Naive thymus-derived CD4-positive, alpha-beta T cell (primary cell): ENCODE measurements at regions of chr1 and their contacts with region 1.

Region 1: GRCh38 chr1:156106624-156107488 is 7.7 kb upstream of the LMNA start:
- DNase-seq: peak in 1 of 9 donors; percentile 52
- ATAC-seq: no peak
- H3K4me3 ChIP-seq: peak overlapping the region; percentile 39
- H3K4me3 Mint-ChIP-seq: peak overlapping the region; percentile 39 to 85 (median 74)
- H3K27ac ChIP-seq: peak overlapping the region; percentile 73
- H3K27ac Mint-ChIP-seq: peak overlapping the region; percentile 88 to 99 (median 96)
- H3K4me1 ChIP-seq: peaks cover 12 to 38% of the 10 kb centered on the region in 2 donors
- H3K4me1 Mint-ChIP-seq: peaks cover 12 to 45% (median 25%) of the 10 kb centered on the region in 7 donors
- H3K27me3 ChIP-seq: peaks cover 0 to 2% of the 10 kb centered on the region in 2 donors
- H3K27me3 Mint-ChIP-seq: peaks cover 0 to 54% (median 0%) of the 10 kb centered on the region in 5 donors

Region 2: GRCh38 chr1:156090822-156091188 is 16.1 kb before region 1 on chr1:
- CTCF ChIA-PET with region 1: interaction called, 5 read pairs
- POLR2A ChIA-PET with region 1: interaction called, 5 read pairs
- intact Hi-C with region 1: loop called in 1 of 2 experiments (anchors 2 kb)
- DNase-seq: peak; percentile 69 to 86 (median 82)
- ATAC-seq: peak; percentile 97
- H3K4me3 ChIP-seq: no peak overlapping the region
- H3K4me3 Mint-ChIP-seq: no peak overlapping the region
- H3K27ac ChIP-seq: no peak overlapping the region
- H3K27ac Mint-ChIP-seq: peak overlapping the region in 5 of 9 donors; percentile 3 to 76 (median 40)
- H3K4me1 ChIP-seq: peaks cover 2 to 4% of the 10 kb centered on the region in 2 donors
- H3K4me1 Mint-ChIP-seq: peaks cover 5 to 13% (median 9%) of the 10 kb centered on the region in 7 donors
- H3K27me3 ChIP-seq: no peaks in the 10 kb centered on the region
- H3K27me3 Mint-ChIP-seq: peaks cover 5 to 57% (median 19%) of the 10 kb centered on the region in 5 donors

Region 3: GRCh38 chr1:156123356-156124196 is 16.7 kb after region 1 on chr1:
- CTCF ChIA-PET with region 1: interaction called, 340 read pairs
- POLR2A ChIA-PET with region 1: interaction called, 4 read pairs
- intact Hi-C with region 1: loop called (anchors 1 kb)
- DNase-seq: peak in 7 of 9 donors; percentile 44 to 72 (median 49)
- ATAC-seq: peak; percentile 21
- H3K4me3 ChIP-seq: no peak overlapping the region
- H3K4me3 Mint-ChIP-seq: peak overlapping the region in 3 of 10 donors; percentile 18 to 60 (median 59)
- H3K27ac ChIP-seq: no peak overlapping the region
- H3K27ac Mint-ChIP-seq: peak overlapping the region in 6 of 9 donors; percentile 43 to 88 (median 76)
- H3K4me1 ChIP-seq: peaks cover 37 to 43% of the 10 kb centered on the region in 2 donors
- H3K4me1 Mint-ChIP-seq: peaks cover 18 to 61% (median 48%) of the 10 kb centered on the region in 7 donors
- H3K27me3 ChIP-seq: no peaks in the 10 kb centered on the region
- H3K27me3 Mint-ChIP-seq: peaks cover under 1 to 29% (median 1%) of the 10 kb centered on the region in 5 donors

Region 4: GRCh38 chr1:156359973-156360372 is 253.1 kb after region 1 on chr1:
- CTCF ChIA-PET with region 1: no interaction called
- POLR2A ChIA-PET with region 1: no interaction called
- intact Hi-C with region 1: no loop called
- DNase-seq: no peak
- ATAC-seq: no peak
- H3K4me3 ChIP-seq: no peak overlapping the region
- H3K4me3 Mint-ChIP-seq: no peak overlapping the region
- H3K27ac ChIP-seq: no peak overlapping the region
- H3K27ac Mint-ChIP-seq: no peak overlapping the region
- H3K4me1 ChIP-seq: no peaks in the 10 kb centered on the region
- H3K4me1 Mint-ChIP-seq: peaks cover 0 to 11% (median 4%) of the 10 kb centered on the region in 7 donors
- H3K27me3 ChIP-seq: no peaks in the 10 kb centered on the region
- H3K27me3 Mint-ChIP-seq: peaks cover 14 to 52% (median 24%) of the 10 kb centered on the region in 5 donors